ENCODE measurements at regions of chr2 and their contacts with region 1.

Region 1: DNA sequence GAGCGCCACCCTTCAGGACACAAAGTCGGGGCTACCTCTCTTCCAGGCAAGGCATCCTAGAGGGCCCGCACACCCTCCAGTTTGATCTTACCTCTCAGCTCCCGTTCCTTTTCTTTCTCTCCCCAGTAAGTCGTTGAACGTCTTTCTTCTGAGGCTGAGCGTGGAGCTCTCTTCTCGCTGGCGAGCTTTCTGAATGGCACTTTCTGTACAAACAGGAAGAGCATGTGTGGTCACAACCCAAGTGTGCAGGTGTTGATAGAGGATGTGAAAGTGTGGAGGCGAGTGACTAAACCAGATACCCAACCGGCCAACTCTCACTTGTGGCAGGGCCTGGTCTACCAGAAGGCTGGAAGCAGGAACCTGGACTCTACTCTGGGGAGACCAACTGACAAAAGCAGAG is at the start of gene AFF3:
- DNase-seq: peak; percentile 93
- ATAC-seq: peak; percentile 81
- H3K4me3 ChIP-seq: peak within 1 kb of the TSS; percentile 66 to 98 (median 91)
- H3K4me3 Mint-ChIP-seq: peak within 1 kb of the TSS; percentile 99
- H3K27ac ChIP-seq: peak within 1 kb of the TSS; percentile 83 to 88
- H3K27ac Mint-ChIP-seq: peak within 1 kb of the TSS; percentile 91
- H3K4me1 ChIP-seq: peaks cover 57 to 58% of the 10 kb centered on the region in 2 donors
- H3K4me1 Mint-ChIP-seq: peaks cover 67% of the 10 kb centered on the region
- H3K27me3 ChIP-seq: no peaks in the 10 kb centered on the region
- H3K27me3 Mint-ChIP-seq: no peaks in the 10 kb centered on the region
- CTCF ChIP-seq: no peak
- total RNA-seq, gene AFF3: 826 and 830 TPM in 2 replicates

Region 2: GRCh38 chr2:99662761-99663341 is 479.5 kb before region 1 on chr2:
- CTCF ChIA-PET with region 1: no interaction called
- POLR2A ChIA-PET with region 1: no interaction called
- intact Hi-C with region 1: no loop called
- DNase-seq: no peak
- ATAC-seq: no peak
- H3K4me3 ChIP-seq: no peak overlapping the region
- H3K4me3 Mint-ChIP-seq: no peak overlapping the region
- H3K27ac ChIP-seq: no peak overlapping the region
- H3K27ac Mint-ChIP-seq: no peak overlapping the region
- H3K4me1 ChIP-seq: no peaks in the 10 kb centered on the region
- H3K4me1 Mint-ChIP-seq: peaks cover 4% of the 10 kb centered on the region
- H3K27me3 ChIP-seq: no peaks in the 10 kb centered on the region
- H3K27me3 Mint-ChIP-seq: no peaks in the 10 kb centered on the region
- CTCF ChIP-seq: no peak

Region 3: DNA sequence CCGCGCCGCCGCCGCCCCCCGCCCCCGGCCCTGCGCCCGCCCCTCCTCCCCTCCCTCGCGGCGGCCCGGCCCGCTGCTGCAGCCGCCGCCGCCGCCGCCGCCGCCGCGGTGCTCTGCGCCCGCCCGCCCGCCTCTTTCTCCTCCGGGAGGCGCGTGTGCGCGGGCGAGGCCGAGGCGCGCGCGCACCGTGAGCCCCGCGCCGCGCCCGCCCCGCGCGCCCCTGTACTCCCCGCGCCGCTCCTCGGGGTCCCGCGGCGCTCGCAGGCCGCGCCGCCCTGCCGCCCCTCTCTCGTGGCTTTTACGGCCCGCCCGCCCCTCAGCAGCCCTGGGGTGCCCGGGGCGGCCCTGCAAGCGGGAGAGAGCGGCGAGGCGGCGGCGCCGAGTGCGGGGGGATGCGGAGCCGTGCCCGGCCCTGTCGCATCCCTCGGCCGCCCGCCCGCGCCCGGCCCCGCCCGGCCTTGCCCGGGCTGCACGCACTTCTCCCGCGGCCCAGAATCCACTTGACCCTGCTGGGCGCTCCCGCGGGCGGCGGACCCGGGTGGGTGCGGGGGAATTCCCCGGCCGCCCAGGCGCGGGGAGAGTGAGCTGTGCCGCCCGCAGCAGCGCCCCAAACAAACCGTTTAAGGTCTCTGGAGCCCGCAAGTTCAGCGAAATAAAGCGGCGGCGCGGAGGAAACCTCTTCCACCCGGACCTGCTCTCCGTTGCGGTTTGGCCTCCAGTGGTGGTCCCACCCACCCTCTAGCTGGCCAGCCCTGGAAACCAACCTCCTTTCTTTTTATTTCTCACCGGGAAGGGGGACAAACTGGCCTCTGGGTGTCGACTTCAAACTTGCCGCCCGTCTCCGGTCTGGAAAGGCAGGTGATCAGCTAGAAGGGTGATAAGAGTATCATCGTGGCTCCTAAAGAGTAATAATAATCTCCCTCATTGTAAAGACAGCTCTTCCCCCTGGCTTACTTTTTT is 37.4 kb before region 1 on chr2:
- CTCF ChIA-PET with region 1: interaction called, 34 read pairs
- POLR2A ChIA-PET with region 1: interaction called, 63 read pairs
- intact Hi-C with region 1: loop called (anchors 1 kb)
- DNase-seq: peak; percentile 69
- ATAC-seq: peak; percentile 66
- H3K4me3 ChIP-seq: peak overlapping the region in 4 of 5 experiments; percentile 41 to 74 (median 58)
- H3K4me3 Mint-ChIP-seq: peak overlapping the region; percentile 90
- H3K27ac ChIP-seq: peak overlapping the region; percentile 30 to 73
- H3K27ac Mint-ChIP-seq: peak overlapping the region; percentile 92
- H3K4me1 ChIP-seq: peaks cover 42 to 43% of the 10 kb centered on the region in 2 donors
- H3K4me1 Mint-ChIP-seq: peaks cover 41% of the 10 kb centered on the region
- H3K27me3 ChIP-seq: no peaks in the 10 kb centered on the region
- H3K27me3 Mint-ChIP-seq: no peaks in the 10 kb centered on the region
- CTCF ChIP-seq: no peak

Region 4: DNA sequence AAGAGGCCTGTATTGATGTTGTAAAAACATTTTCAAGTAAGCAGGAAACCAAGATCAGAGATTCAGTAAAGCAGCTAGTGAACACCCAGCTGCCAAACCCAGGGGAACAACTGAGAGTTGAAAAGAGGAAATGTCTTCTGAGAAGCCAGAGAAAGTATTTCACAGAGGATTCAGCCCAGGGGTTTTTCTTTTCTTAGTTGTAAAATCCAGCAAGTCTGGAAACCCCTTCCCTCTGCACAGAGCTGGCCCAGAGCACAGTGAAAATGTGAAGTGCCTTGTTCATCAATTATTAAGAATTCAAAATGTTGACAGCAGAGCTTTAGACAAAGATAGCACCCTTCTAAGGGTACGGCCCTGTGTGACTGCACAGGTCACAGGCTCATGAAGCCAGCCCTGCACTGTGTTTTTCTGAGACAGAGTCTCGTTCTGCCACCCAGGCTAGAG is 28.4 kb before region 1 on chr2:
- CTCF ChIA-PET with region 1: interaction called, 34 read pairs
- POLR2A ChIA-PET with region 1: interaction called, 63 read pairs
- intact Hi-C with region 1: loop called (anchors 1 kb)
- DNase-seq: peak; percentile 74
- ATAC-seq: peak; percentile 50
- H3K4me3 ChIP-seq: peak overlapping the region in 3 of 5 experiments; percentile 16 to 39 (median 25)
- H3K4me3 Mint-ChIP-seq: peak overlapping the region; percentile 78
- H3K27ac ChIP-seq: peak overlapping the region; percentile 72 to 84
- H3K27ac Mint-ChIP-seq: peak overlapping the region; percentile 93
- H3K4me1 ChIP-seq: peaks cover 62 to 67% of the 10 kb centered on the region in 2 donors
- H3K4me1 Mint-ChIP-seq: peaks cover 81% of the 10 kb centered on the region
- H3K27me3 ChIP-seq: no peaks in the 10 kb centered on the region
- H3K27me3 Mint-ChIP-seq: no peaks in the 10 kb centered on the region
- CTCF ChIP-seq: no peak

Region 5: GRCh38 chr2:100235098-100235497 is 92.7 kb after region 1 on chr2:
- CTCF ChIA-PET with region 1: interaction called, 26 read pairs
- POLR2A ChIA-PET with region 1: interaction called, 34 read pairs
- intact Hi-C with region 1: loop called (anchors 1 kb)
- DNase-seq: peak; percentile 84
- ATAC-seq: peak; percentile 91
- H3K4me3 ChIP-seq: peak overlapping the region in 2 of 5 experiments; percentile 2 to 21
- H3K4me3 Mint-ChIP-seq: peak overlapping the region; percentile 81
- H3K27ac ChIP-seq: peak overlapping the region; percentile 56 to 79
- H3K27ac Mint-ChIP-seq: peak overlapping the region; percentile 94
- H3K4me1 ChIP-seq: peaks cover 51 to 54% of the 10 kb centered on the region in 2 donors
- H3K4me1 Mint-ChIP-seq: peaks cover 61% of the 10 kb centered on the region
- H3K27me3 ChIP-seq: no peaks in the 10 kb centered on the region
- H3K27me3 Mint-ChIP-seq: no peaks in the 10 kb centered on the region
- CTCF ChIP-seq: no peak

Region 6: DNA sequence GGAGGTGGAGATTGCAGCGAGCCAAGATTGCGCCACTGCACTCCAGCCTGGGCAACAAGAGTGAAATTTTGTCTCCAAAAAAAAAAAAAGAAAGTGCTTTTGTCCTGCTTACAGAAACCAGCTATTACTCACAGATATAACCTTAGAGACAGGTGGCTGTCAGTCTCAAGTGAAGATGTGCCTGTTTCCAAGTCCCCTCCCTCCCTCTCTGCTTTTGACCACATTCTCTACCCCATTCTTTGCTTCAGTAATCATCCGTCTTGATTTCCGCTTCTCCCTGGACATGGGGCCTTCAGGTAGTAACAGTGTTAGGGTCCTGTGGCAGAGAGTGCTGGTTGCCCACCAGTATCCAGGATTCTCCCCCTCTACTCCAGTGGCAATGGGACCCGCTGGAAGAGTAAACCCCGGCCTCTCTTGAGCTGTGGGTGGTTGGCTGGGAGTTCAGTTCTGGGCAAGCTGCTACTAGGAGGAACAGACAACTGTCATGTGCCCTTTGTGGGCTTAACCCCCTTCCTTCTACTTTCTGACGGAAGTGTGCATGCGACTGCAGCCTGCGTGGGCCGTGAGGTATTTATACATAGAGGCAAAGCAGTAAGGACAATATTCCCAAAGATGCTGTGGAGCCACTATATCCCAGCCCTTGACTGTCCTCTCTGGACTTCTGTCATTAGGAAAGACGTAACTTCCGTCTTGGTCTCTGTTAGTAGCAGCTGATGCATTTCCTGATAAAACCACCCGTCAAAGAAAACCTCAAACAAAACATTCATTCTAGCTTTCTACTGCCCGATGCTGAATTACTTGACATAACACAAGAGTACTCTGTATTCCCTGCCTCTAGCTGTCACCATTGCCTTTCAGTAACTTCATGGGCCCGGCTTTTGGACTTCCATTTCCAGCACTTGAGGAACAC is 438.2 kb after region 1 on chr2:
- CTCF ChIA-PET with region 1: no interaction called
- POLR2A ChIA-PET with region 1: no interaction called
- intact Hi-C with region 1: loop called (anchors 10 kb)
- DNase-seq: peak; percentile 87
- ATAC-seq: peak; percentile 78
- H3K4me3 ChIP-seq: peak overlapping the region in 4 of 5 experiments; percentile 0 to 36 (median 20)
- H3K4me3 Mint-ChIP-seq: peak overlapping the region; percentile 78
- H3K27ac ChIP-seq: peak overlapping the region; percentile 91 to 95
- H3K27ac Mint-ChIP-seq: peak overlapping the region; percentile 99
- H3K4me1 ChIP-seq: peaks cover 18 to 20% of the 10 kb centered on the region in 2 donors
- H3K4me1 Mint-ChIP-seq: peaks cover 25% of the 10 kb centered on the region
- H3K27me3 ChIP-seq: no peaks in the 10 kb centered on the region
- H3K27me3 Mint-ChIP-seq: no peaks in the 10 kb centered on the region
- CTCF ChIP-seq: no peak

Region 7: DNA sequence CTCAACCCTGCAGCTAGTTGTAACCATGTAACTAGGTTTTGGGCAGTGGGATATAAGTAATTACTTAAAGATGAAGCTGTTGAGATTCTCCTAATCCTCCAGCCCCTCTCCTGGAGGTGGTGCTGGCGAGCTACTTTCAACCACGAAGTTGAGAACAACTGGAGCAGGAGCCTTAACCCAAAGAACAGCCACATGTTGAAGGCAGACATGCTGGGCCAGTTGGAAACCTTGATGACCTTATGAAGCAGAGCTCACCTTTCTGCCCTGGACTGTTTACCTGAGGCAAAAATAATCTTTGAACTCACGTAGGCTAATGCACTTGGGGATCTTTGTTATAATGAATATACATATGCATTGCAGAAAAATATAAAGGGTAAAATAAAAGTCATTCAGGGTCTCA is 588.0 kb after region 1 on chr2:
- CTCF ChIA-PET with region 1: no interaction called
- POLR2A ChIA-PET with region 1: no interaction called
- intact Hi-C with region 1: no loop called
- DNase-seq: no peak
- ATAC-seq: no peak
- H3K4me3 ChIP-seq: no peak overlapping the region
- H3K4me3 Mint-ChIP-seq: no peak overlapping the region
- H3K27ac ChIP-seq: no peak overlapping the region
- H3K27ac Mint-ChIP-seq: no peak overlapping the region
- H3K4me1 ChIP-seq: no peaks in the 10 kb centered on the region
- H3K4me1 Mint-ChIP-seq: no peaks in the 10 kb centered on the region
- H3K27me3 ChIP-seq: peaks cover 0 to 6% (median 3%) of the 10 kb centered on the region in 4 experiments
- H3K27me3 Mint-ChIP-seq: peaks cover 63% of the 10 kb centered on the region
- CTCF ChIP-seq: no peak

Measured in B cell (primary cell).